ENCODE measurements at regions of chr13 and their contacts with region 1.

Region 1: GRCh38 chr13:72727417-72728289 is at the starts of genes BORA and MZT1:
- DNase-seq: peak; percentile 87 to 95 (median 94)
- ATAC-seq: peak; percentile 95
- H3K4me3 ChIP-seq: peak within 1 kb of the TSS; percentile 93
- H3K4me3 Mint-ChIP-seq: peak within 1 kb of the TSS; percentile 85 to 99 (median 95)
- H3K27ac ChIP-seq: peak within 1 kb of the TSS; percentile 73
- H3K27ac Mint-ChIP-seq: peak within 1 kb of the TSS; percentile 85 to 95 (median 91)
- H3K4me1 ChIP-seq: peaks cover 23 to 30% of the 10 kb centered on the region in 2 donors
- H3K4me1 Mint-ChIP-seq: peaks cover 30 to 69% (median 54%) of the 10 kb centered on the region in 7 donors
- H3K27me3 ChIP-seq: no peaks in the 10 kb centered on the region
- H3K27me3 Mint-ChIP-seq: no peaks in the 10 kb centered on the region
- total RNA-seq, gene BORA: 4.7 to 18.0 (median 6.2) TPM
- total RNA-seq, gene MZT1: 4.5 to 14.9 (median 6.3) TPM

Region 2: DNA sequence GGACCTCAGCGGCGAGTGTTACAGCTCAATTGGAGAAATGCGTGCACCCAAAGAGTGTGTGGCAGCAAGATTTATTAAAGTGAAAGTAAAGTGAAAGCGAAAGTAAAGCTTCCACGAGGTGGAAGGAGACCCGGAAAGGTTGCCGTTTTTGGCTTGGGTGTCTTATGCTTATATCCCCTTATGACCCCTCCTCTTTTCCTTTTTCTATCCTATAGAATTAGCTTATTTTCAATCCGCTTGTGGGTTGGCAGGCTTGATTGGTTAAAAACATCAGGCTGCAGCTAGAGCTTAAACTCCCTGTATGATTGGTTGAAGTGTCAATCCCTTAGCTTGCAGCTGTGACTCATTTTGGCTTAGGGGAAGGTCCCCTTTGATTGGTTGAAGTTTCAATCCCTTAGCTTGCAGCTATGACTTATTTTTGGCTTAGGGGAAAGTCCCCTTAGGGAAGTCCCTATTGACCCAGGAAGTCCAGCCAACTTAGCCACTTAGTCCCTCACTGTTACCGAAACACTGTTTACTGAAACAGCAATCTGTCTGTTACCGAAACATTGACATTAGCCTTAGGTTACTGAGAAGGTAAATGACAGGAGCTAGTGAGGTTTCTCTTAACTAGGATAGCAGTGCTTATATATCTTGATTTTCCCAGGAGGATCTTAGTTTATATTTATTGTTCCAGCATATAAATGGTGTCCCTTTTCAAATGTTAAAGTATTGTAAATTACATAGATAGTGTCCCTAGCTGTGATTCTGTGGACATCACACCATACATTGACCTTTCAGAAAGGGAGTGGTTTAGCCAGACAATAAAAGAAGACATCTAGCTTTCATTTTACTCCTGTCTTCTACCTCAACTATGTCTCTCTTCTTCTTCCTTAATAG is 1436.5 kb before region 1 on chr13:
- CTCF ChIA-PET with region 1: no interaction called
- POLR2A ChIA-PET with region 1: no interaction called
- intact Hi-C with region 1: loop called in 1 of 2 experiments (anchors 1 kb)
- DNase-seq: peak in 7 of 9 donors; percentile 62 to 78 (median 74)
- ATAC-seq: peak; percentile 81
- H3K4me3 ChIP-seq: peak overlapping the region; percentile 56
- H3K4me3 Mint-ChIP-seq: peak overlapping the region; percentile 78 to 94 (median 88)
- H3K27ac ChIP-seq: peak overlapping the region; percentile 56
- H3K27ac Mint-ChIP-seq: peak overlapping the region; percentile 83 to 95 (median 93)
- H3K4me1 ChIP-seq: peaks cover 0 to 9% of the 10 kb centered on the region in 2 donors
- H3K4me1 Mint-ChIP-seq: peaks cover 0 to 31% (median 18%) of the 10 kb centered on the region in 7 donors
- H3K27me3 ChIP-seq: no peaks in the 10 kb centered on the region
- H3K27me3 Mint-ChIP-seq: peaks cover 0 to 10% (median 6%) of the 10 kb centered on the region in 5 donors

Region 3: GRCh38 chr13:72763411-72763810 is 35.8 kb after region 1 on chr13:
- CTCF ChIA-PET with region 1: no interaction called
- POLR2A ChIA-PET with region 1: interaction called, 3 read pairs
- intact Hi-C with region 1: loop called in 1 of 2 experiments (anchors 5 kb)
- DNase-seq: no peak
- ATAC-seq: no peak
- H3K4me3 ChIP-seq: no peak overlapping the region
- H3K4me3 Mint-ChIP-seq: no peak overlapping the region
- H3K27ac ChIP-seq: no peak overlapping the region
- H3K27ac Mint-ChIP-seq: no peak overlapping the region
- H3K4me1 ChIP-seq: no peaks in the 10 kb centered on the region
- H3K4me1 Mint-ChIP-seq: peaks cover 0 to 5% (median 0%) of the 10 kb centered on the region in 7 donors
- H3K27me3 ChIP-seq: no peaks in the 10 kb centered on the region
- H3K27me3 Mint-ChIP-seq: no peaks in the 10 kb centered on the region

Region 4: DNA sequence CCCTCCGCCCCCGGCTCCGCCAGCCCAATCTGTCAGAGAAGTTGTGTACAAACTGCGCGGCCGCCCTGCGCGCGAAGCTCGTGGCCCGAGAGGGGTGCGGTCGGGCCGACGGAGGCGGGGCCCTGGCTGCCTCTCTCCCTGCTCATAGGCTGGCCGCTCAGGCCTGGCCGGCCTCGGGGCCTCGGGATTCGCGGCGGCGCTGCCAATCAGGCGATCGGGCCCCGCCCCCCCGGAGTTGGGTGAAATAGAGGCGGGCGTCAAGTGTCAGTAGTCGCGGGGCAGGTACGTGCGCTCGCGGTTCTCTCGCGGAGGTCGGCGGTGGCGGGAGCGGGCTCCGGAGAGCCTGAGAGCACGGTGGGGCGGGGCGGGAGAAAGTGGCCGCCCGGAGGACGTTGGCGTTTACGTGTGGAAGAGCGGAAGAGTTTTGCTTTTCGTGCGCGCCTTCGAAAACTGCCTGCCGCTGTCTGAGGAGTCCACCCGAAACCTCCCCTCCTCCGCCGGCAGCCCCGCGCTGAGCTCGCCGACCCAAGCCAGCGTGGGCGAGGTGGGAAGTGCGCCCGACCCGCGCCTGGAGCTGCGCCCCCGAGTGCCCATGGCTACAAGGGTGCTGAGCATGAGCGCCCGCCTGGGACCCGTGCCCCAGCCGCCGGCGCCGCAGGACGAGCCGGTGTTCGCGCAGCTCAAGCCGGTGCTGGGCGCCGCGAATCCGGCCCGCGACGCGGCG is 331.2 kb after region 1 on chr13 and contains the start of gene KLF5:
- CTCF ChIA-PET with region 1: no interaction called
- POLR2A ChIA-PET with region 1: interaction called, 3 read pairs
- intact Hi-C with region 1: loop called (anchors 1 kb)
- DNase-seq: peak; percentile 93 to 98 (median 94)
- ATAC-seq: peak; percentile 98
- H3K4me3 ChIP-seq: peak within 1 kb of the TSS; percentile 58
- H3K4me3 Mint-ChIP-seq: peak within 1 kb of the TSS; percentile 82 to 94 (median 90)
- H3K27ac ChIP-seq: peak within 1 kb of the TSS; percentile 42
- H3K27ac Mint-ChIP-seq: peak within 1 kb of the TSS; percentile 38 to 92 (median 79)
- H3K4me1 ChIP-seq: peaks cover 4 to 10% of the 10 kb centered on the region in 2 donors
- H3K4me1 Mint-ChIP-seq: peaks cover 6 to 32% (median 23%) of the 10 kb centered on the region in 7 donors
- H3K27me3 ChIP-seq: peaks cover 5 to 10% of the 10 kb centered on the region in 2 donors
- H3K27me3 Mint-ChIP-seq: peaks cover 19 to 58% (median 40%) of the 10 kb centered on the region in 5 donors
- total RNA-seq, gene KLF5: 3.6 to 13.3 (median 5.7) TPM

Region 5: DNA sequence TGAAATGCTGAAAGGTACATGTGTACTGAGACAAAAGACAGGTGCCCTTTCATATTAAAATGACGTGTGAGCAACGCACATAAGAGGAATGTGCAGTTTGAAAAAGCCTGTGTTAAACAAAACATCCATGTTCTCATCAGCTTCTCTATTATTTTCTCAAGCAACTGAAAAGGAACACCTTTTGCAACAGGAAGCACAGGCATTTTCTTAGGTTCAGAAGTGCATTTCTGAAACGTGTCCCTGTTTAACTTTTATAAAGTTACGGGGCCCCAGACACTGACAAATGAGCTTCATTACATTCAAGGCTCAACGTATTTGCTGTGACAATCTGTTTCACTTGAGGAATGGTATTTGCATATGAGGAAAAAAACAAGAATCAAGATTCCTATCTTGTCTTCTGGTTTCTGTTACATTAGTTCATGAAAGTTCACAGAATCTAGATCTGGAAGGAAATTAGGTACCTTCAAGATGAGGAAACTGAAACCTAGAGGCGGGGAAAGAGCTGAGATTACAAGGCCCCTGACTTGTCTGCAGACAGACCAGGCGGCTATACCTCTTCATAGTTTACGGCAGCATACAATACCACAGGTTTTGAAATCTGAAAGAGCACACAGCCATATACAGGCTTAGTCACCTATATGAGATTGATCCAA is 974.9 kb after region 1 on chr13:
- CTCF ChIA-PET with region 1: no interaction called
- POLR2A ChIA-PET with region 1: no interaction called
- intact Hi-C with region 1: loop called in 1 of 2 experiments (anchors 1 kb)
- DNase-seq: peak in 7 of 9 donors; percentile 70 to 86 (median 82)
- ATAC-seq: peak; percentile 83
- H3K4me3 ChIP-seq: peak overlapping the region; percentile 39
- H3K4me3 Mint-ChIP-seq: peak overlapping the region; percentile 65 to 92 (median 80)
- H3K27ac ChIP-seq: peak overlapping the region; percentile 79
- H3K27ac Mint-ChIP-seq: peak overlapping the region; percentile 91 to 100 (median 98)
- H3K4me1 ChIP-seq: peaks cover 0 to 22% of the 10 kb centered on the region in 2 donors
- H3K4me1 Mint-ChIP-seq: peaks cover 18 to 66% (median 49%) of the 10 kb centered on the region in 7 donors
- H3K27me3 ChIP-seq: no peaks in the 10 kb centered on the region
- H3K27me3 Mint-ChIP-seq: no peaks in the 10 kb centered on the region

Region 6: DNA sequence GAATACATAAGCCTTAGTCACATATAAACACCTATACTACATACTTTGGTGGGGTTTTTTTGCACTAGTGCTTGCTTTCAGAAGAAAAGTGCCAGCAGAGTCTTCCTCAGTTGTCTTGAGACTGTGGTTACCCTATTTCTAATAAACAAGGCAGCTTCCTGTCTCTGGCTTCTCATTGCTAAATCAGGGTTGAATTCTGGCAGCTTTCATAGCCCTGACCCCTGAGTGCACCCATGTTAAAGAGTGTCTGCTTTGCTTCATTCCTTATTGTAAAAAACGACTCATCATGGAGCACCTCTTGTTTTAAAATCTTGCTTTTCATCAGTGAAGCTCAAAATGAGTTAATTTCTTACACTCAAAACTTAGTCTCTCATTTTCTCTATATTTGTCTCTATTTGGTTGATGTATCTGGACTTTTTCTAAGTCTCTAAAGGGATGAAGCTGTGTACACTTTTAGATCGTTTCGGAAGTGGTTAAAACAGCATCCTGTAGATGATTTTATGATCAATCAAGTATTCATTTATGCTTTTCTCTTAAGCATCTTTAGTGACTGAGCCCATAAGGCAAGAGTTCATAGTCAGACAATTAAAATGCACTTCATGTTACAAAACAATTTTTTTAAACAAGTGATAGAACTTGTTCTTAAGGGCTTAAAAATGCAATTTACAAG is 1334.4 kb after region 1 on chr13:
- CTCF ChIA-PET with region 1: no interaction called
- POLR2A ChIA-PET with region 1: no interaction called
- intact Hi-C with region 1: no loop called
- DNase-seq: peak in 7 of 9 donors; percentile 41 to 72 (median 63)
- ATAC-seq: peak; percentile 86
- H3K4me3 ChIP-seq: peak overlapping the region; percentile 2
- H3K4me3 Mint-ChIP-seq: peak overlapping the region; percentile 1 to 80 (median 60)
- H3K27ac ChIP-seq: peak overlapping the region; percentile 42
- H3K27ac Mint-ChIP-seq: peak overlapping the region; percentile 5 to 86 (median 72)
- H3K4me1 ChIP-seq: peaks cover 47 to 74% of the 10 kb centered on the region in 2 donors
- H3K4me1 Mint-ChIP-seq: peaks cover 50 to 95% (median 90%) of the 10 kb centered on the region in 7 donors
- H3K27me3 ChIP-seq: no peaks in the 10 kb centered on the region
- H3K27me3 Mint-ChIP-seq: no peaks in the 10 kb centered on the region

Measured in naive thymus-derived CD4-positive, alpha-beta T cell (primary cell).